ENCODE measurements at regions of chr15 and their contacts with region 1.

Region 1: GRCh38 chr15:73560501-73561117 is 72.6 kb downstream of the NPTN start:
- DNase-seq: no peak
- H3K4me3 ChIP-seq: no peak overlapping the region
- H3K27ac ChIP-seq: peak overlapping the region in 1 of 4 donors; percentile 22
- H3K4me1 ChIP-seq: peaks cover 5 to 28% (median 24%) of the 10 kb centered on the region in 4 donors
- H3K27me3 ChIP-seq: no peaks in the 10 kb centered on the region
- CTCF ChIP-seq: peak; percentile 45 to 54 (median 53)
- EP300 ChIP-seq: no peak
- POLR2A ChIP-seq: no peak

Region 2: GRCh38 chr15:72783563-72784237 is 776.9 kb before region 1 on chr15 and contains the start of gene ADPGK:
- intact Hi-C with region 1: loop called (anchors 10 kb)
- DNase-seq: peak; percentile 97
- H3K4me3 ChIP-seq: peak within 1 kb of the TSS; percentile 89 to 100 (median 100)
- H3K27ac ChIP-seq: peak within 1 kb of the TSS; percentile 89 to 97 (median 94)
- H3K4me1 ChIP-seq: peaks cover 23 to 63% (median 43%) of the 10 kb centered on the region in 4 donors
- H3K27me3 ChIP-seq: peaks cover 0 to 4% (median 0%) of the 10 kb centered on the region in 4 donors
- CTCF ChIP-seq: peak in 1 of 3 experiments; percentile 31
- EP300 ChIP-seq: no peak
- POLR2A ChIP-seq: peak; percentile 68
- total RNA-seq, gene ADPGK: 20.2 to 37.4 (median 22.3) TPM

Region 3: DNA sequence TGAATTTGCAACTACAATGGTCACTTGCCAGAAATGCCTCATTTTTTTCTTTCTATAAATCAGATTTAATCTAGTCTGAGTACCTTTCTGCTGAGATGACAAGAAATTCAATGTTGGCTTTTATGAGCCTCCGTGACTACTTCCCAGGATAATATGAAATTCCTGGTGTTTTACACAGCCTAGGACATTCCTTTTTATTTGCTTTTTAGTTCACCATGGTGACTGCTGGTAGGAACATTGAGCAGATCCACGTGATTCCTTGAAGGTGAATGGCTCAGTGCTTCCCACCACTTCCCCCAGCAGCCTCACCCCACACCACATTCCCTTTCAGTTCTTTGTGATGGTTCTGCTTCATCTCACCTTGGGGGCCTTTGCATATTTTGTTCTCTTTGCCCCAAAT is 76.9 kb after region 1 on chr15:
- intact Hi-C with region 1: loop called (anchors 2 kb)
- DNase-seq: no peak
- H3K4me3 ChIP-seq: no peak overlapping the region
- H3K27ac ChIP-seq: no peak overlapping the region
- H3K4me1 ChIP-seq: peaks cover 8 to 21% (median 13%) of the 10 kb centered on the region in 4 donors
- H3K27me3 ChIP-seq: no peaks in the 10 kb centered on the region
- CTCF ChIP-seq: no peak
- EP300 ChIP-seq: no peak
- POLR2A ChIP-seq: no peak